ENCODE measurements at regions of chr10 and their contacts with region 1.

Region 1: GRCh38 chr10:125719146-125720001 is at the start of gene EDRF1:
- DNase-seq: peak; percentile 100
- H3K4me3 Mint-ChIP-seq: peak within 1 kb of the TSS; percentile 98
- H3K27ac Mint-ChIP-seq: peak within 1 kb of the TSS; percentile 96
- H3K4me1 Mint-ChIP-seq: peaks cover 18% of the 10 kb centered on the region
- H3K27me3 Mint-ChIP-seq: no peaks in the 10 kb centered on the region
- total RNA-seq, gene EDRF1: 40.8 and 43.2 TPM in 2 replicates

Region 2: DNA sequence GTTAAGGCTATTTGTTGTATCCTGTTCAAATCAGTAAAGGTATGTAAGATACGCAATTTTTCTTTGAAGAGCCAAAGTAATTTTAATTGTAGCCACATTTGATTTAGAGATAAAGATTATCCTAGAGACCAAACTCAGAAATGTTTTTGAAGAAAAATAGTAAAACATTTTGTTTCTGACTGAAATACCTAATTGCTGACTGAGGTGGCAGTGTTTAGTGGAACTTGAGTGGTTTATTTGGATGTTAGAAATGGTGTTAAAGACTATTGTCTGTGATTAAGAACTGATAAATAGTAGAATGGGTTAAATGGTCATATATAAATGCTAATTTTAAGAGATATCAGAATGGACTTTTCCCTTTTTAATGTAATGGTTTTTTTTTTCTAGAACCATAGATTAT is 15.4 kb after region 1 on chr10:
- intact Hi-C with region 1: loop called (anchors 2 kb)
- DNase-seq: no peak
- H3K4me3 Mint-ChIP-seq: no peak overlapping the region
- H3K27ac Mint-ChIP-seq: no peak overlapping the region
- H3K4me1 Mint-ChIP-seq: peaks cover 2% of the 10 kb centered on the region
- H3K27me3 Mint-ChIP-seq: no peaks in the 10 kb centered on the region

Region 3: GRCh38 chr10:126041781-126042231 is 322.4 kb after region 1 on chr10:
- intact Hi-C with region 1: no loop called
- DNase-seq: peak; percentile 91
- H3K4me3 Mint-ChIP-seq: peak overlapping the region; percentile 10
- H3K27ac Mint-ChIP-seq: peak overlapping the region; percentile 74
- H3K4me1 Mint-ChIP-seq: peaks cover 4% of the 10 kb centered on the region
- H3K27me3 Mint-ChIP-seq: no peaks in the 10 kb centered on the region

Measured in activated CD4-positive, alpha-beta T cell treated with anti-CD3 and anti-CD28 coated beads, Interleukin-2, amount 10 ng/mL, durations not matched to agents 24 days and 14 days (primary cell).